Activated CD8-positive, alpha-beta T cell treated with anti-CD3 and anti-CD28 coated beads, Interleukin-2, amount 10 ng/mL, durations not matched to agents 7 days and 5 days (primary cell): ENCODE measurements at regions of chr5 and their contacts with region 1.

Region 1: DNA sequence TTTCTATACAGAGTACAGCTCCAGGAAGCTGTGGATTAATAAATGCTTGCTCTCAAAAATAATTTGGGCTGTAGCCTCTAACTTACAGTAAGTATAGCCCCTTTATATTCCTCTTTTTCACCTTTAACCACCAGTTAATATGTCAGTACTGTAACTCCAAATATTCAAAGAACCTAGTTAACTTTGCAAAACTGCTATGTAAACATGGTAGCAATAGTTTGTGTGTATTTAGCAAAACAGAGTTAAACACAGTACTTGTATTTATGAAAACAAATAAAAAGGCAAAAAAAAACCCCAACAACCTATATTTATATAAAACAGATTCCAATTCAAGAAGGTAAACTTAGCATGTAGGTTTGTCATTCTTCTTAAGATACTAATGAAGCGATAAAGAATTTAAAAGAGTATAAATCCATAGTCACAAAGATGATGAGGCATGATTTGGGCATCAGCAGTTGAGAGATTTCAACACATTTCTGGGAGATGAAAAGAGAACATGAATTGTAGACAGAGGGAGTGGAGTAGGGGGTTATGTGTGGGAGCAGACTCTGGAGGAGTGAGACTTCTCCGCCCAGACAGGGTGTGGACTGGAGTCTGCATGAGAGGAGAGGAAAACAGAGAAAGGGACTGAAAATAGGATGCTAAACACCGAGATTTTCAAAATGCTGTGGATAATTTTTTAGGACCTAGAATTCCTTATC is 47.0 kb upstream of the F2RL1 start:
- DNase-seq: no peak
- ATAC-seq: no peak
- H3K4me3 Mint-ChIP-seq: no peak overlapping the region
- H3K27ac Mint-ChIP-seq: no peak overlapping the region
- H3K4me1 Mint-ChIP-seq: peaks cover 4% of the 10 kb centered on the region
- H3K27me3 Mint-ChIP-seq: no peaks in the 10 kb centered on the region

Region 2: GRCh38 chr5:76292620-76293322 is 479.1 kb before region 1 on chr5:
- CTCF ChIA-PET with region 1: no interaction called
- POLR2A ChIA-PET with region 1: no interaction called
- DNase-seq: no peak
- ATAC-seq: no peak
- H3K4me3 Mint-ChIP-seq: no peak overlapping the region
- H3K27ac Mint-ChIP-seq: no peak overlapping the region
- H3K4me1 Mint-ChIP-seq: peaks cover 8% of the 10 kb centered on the region
- H3K27me3 Mint-ChIP-seq: peaks cover 12% of the 10 kb centered on the region

Region 3: DNA sequence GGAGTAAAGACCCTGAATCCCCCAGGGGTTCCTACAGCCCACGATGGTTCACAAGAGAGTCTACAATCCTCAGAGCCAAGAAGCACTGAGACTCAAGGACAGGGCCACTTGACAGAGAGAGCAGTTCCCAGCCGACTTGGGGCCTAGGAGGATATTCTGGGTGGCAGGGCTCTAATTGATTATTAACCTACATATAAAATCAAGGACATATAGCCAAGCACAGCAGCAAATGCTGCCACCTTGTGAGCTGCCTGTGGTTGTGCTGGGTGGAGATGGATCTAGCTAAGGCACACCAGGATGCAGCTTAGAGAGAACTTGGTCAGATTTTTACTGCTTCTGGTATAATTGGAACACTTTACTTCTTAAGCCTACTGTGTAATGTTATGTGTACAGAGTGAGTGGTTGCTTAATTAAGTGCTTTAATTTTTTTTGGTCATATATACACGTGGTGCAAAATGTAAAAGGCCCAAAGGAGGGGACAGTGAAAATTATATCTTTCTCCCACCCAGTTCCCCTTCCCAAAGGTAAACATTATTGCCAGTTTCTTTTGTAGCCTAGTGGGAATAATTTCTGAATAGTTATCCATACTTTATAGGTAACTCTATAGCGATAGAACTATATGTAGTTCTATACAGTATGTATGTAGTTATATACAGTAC is 227.5 kb before region 1 on chr5:
- CTCF ChIA-PET with region 1: interaction called, 12 read pairs
- POLR2A ChIA-PET with region 1: no interaction called
- DNase-seq: peak; percentile 67
- ATAC-seq: peak; percentile 42
- H3K4me3 Mint-ChIP-seq: peak overlapping the region; percentile 61
- H3K27ac Mint-ChIP-seq: peak overlapping the region; percentile 91
- H3K4me1 Mint-ChIP-seq: peaks cover 62% of the 10 kb centered on the region
- H3K27me3 Mint-ChIP-seq: no peaks in the 10 kb centered on the region

Region 4: GRCh38 chr5:76571559-76571958 is 200.3 kb before region 1 on chr5:
- CTCF ChIA-PET with region 1: no interaction called
- POLR2A ChIA-PET with region 1: no interaction called
- DNase-seq: no peak
- ATAC-seq: no peak
- H3K4me3 Mint-ChIP-seq: no peak overlapping the region
- H3K27ac Mint-ChIP-seq: no peak overlapping the region
- H3K4me1 Mint-ChIP-seq: no peaks in the 10 kb centered on the region
- H3K27me3 Mint-ChIP-seq: no peaks in the 10 kb centered on the region

Region 5: GRCh38 chr5:76608833-76609232 is 163.0 kb before region 1 on chr5:
- CTCF ChIA-PET with region 1: interaction called, 33 read pairs
- POLR2A ChIA-PET with region 1: interaction called, 3 read pairs
- DNase-seq: no peak
- ATAC-seq: no peak
- H3K4me3 Mint-ChIP-seq: no peak overlapping the region
- H3K27ac Mint-ChIP-seq: no peak overlapping the region
- H3K4me1 Mint-ChIP-seq: peaks cover 8% of the 10 kb centered on the region
- H3K27me3 Mint-ChIP-seq: no peaks in the 10 kb centered on the region

Region 6: GRCh38 chr5:76641514-76642120 is 130.2 kb before region 1 on chr5:
- CTCF ChIA-PET with region 1: interaction called, 17 read pairs
- POLR2A ChIA-PET with region 1: no interaction called
- DNase-seq: peak; percentile 77
- ATAC-seq: peak; percentile 63
- H3K4me3 Mint-ChIP-seq: no peak overlapping the region
- H3K27ac Mint-ChIP-seq: no peak overlapping the region
- H3K4me1 Mint-ChIP-seq: peaks cover 11% of the 10 kb centered on the region
- H3K27me3 Mint-ChIP-seq: no peaks in the 10 kb centered on the region

Region 7: DNA sequence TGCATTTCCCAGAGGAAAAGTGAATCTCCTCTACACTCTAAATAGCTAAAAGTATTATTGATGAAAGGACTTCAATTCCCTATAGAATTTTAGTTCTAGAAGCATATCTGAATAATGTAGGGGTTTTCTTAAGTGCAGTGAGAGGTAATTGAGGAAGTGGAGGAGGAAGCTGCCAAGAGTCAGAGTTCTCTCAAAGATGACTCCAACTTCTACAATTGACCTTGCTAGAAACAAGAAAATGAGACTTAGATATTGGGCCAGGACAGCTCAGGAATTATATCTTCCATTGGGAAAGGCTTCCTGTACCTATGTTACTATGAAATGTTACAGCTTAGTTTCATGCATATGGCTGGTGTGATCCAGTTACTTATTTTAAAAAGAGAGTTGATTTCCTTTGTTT is 66.3 kb before region 1 on chr5:
- CTCF ChIA-PET with region 1: interaction called, 29 read pairs
- POLR2A ChIA-PET with region 1: no interaction called
- DNase-seq: no peak
- ATAC-seq: no peak
- H3K4me3 Mint-ChIP-seq: no peak overlapping the region
- H3K27ac Mint-ChIP-seq: no peak overlapping the region
- H3K4me1 Mint-ChIP-seq: peaks cover 8% of the 10 kb centered on the region
- H3K27me3 Mint-ChIP-seq: no peaks in the 10 kb centered on the region

Region 8: DNA sequence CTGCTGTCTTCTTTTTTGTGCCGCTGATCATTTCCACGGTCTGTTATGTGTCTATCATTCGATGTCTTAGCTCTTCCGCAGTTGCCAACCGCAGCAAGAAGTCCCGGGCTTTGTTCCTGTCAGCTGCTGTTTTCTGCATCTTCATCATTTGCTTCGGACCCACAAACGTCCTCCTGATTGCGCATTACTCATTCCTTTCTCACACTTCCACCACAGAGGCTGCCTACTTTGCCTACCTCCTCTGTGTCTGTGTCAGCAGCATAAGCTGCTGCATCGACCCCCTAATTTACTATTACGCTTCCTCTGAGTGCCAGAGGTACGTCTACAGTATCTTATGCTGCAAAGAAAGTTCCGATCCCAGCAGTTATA is 38.8 kb before region 1 on chr5:
- CTCF ChIA-PET with region 1: interaction called, 78 read pairs
- POLR2A ChIA-PET with region 1: interaction called, 8 read pairs
- DNase-seq: peak; percentile 67
- ATAC-seq: peak; percentile 80
- H3K4me3 Mint-ChIP-seq: peak overlapping the region; percentile 38
- H3K27ac Mint-ChIP-seq: peak overlapping the region; percentile 75
- H3K4me1 Mint-ChIP-seq: peaks cover 31% of the 10 kb centered on the region
- H3K27me3 Mint-ChIP-seq: no peaks in the 10 kb centered on the region

Region 9: GRCh38 chr5:76831110-76831452 is 59.2 kb after region 1 on chr5:
- CTCF ChIA-PET with region 1: no interaction called
- POLR2A ChIA-PET with region 1: no interaction called
- DNase-seq: no peak
- ATAC-seq: no peak
- H3K4me3 Mint-ChIP-seq: no peak overlapping the region
- H3K27ac Mint-ChIP-seq: no peak overlapping the region
- H3K4me1 Mint-ChIP-seq: no peaks in the 10 kb centered on the region
- H3K27me3 Mint-ChIP-seq: peaks cover under 1% of the 10 kb centered on the region

Region 10: DNA sequence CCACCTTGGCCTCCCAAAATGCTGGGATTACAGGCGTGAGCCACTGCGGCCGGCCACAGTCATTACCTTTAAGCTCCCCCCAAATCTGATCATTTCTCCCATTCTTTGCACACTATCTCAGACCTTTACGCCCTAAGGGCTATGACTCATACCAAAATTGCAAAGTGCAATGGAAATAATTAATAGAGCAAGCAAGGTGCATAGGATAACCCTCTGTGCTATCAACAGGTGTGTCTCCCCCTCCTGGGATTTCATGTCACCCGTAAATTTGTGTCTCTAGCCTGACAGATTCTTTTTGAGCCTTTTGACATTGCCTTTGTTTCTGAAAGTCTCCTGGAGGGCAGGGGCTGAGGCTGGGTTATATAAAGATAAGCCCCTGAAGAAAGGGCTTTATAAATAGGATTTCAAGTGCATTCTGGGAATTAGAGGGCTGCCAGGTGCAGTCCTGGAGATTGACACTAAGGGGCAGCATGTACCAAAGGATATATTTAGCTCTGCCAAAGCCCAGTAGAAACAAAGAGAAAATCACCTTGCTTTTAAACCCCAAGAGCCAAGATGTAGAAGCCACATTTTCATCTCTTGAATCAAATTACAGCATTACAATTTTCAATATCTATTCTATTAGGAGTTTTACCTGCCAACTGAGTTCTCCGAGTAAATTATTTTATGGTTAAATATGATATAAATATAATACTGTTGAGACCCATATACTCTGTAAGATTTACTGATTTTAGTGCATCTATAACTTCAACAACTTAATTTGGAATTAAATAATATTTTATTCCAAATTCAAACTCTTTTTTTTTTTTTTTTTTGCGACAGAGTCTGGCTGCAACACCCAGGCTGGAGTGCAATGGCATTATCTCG is 96.2 kb after region 1 on chr5:
- CTCF ChIA-PET with region 1: no interaction called
- POLR2A ChIA-PET with region 1: no interaction called
- DNase-seq: peak; percentile 80
- ATAC-seq: peak; percentile 76
- H3K4me3 Mint-ChIP-seq: no peak overlapping the region
- H3K27ac Mint-ChIP-seq: no peak overlapping the region
- H3K4me1 Mint-ChIP-seq: peaks cover 4% of the 10 kb centered on the region
- H3K27me3 Mint-ChIP-seq: no peaks in the 10 kb centered on the region